Cardiac septum (tissue), 1 donor: ENCODE measurements at regions of chr9 and their contacts with region 1.

Region 1: GRCh38 chr9:2495221-2495974 is 126.2 kb upstream of the VLDLR start:
- DNase-seq: no peak

Region 2: DNA sequence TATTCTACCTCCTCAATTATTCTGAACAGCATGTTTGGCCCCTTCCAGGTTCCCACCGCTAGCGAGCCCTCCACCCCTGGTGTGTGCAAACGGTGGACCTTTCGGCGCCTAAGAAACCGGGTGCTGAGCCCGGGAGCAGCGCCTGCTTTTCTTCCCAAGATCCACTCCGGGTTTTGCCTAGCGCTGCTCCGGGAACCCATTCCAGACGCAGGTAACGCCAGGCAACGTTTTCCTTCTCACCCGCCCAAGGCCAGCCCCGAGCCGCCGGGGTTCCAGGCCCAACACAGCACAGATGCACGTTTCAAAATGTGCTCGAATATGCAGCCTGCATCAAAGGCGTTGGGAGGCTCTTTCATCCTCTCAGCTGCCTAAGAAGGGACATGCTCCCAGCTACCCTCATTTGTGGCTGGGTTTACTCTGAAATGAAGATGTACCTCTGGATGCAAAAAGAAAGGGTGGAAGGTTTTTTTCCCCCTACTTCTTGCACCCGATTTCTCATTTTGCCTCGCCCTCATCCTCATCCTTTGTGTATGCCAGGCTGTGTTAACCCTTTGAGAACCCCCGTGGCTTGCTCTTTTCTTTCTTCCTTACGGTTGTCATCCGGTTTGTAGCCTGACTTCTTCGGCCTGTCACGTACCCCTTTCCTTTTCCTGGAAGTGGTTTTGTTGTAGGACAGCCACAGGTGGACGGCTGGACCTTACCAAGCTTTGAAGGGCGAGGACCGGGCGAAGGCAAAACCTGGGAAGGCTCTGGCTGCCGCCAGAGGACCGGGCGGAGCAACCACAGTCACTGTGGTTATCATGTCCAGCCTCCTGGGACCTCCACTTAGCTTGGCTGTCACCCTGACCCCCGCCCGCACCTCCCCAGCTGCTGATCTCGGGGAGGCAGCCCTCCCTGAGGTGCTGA is 253.3 kb before region 1 on chr9:
- intact Hi-C with region 1: no loop called
- DNase-seq: peak; percentile 88

Region 3: DNA sequence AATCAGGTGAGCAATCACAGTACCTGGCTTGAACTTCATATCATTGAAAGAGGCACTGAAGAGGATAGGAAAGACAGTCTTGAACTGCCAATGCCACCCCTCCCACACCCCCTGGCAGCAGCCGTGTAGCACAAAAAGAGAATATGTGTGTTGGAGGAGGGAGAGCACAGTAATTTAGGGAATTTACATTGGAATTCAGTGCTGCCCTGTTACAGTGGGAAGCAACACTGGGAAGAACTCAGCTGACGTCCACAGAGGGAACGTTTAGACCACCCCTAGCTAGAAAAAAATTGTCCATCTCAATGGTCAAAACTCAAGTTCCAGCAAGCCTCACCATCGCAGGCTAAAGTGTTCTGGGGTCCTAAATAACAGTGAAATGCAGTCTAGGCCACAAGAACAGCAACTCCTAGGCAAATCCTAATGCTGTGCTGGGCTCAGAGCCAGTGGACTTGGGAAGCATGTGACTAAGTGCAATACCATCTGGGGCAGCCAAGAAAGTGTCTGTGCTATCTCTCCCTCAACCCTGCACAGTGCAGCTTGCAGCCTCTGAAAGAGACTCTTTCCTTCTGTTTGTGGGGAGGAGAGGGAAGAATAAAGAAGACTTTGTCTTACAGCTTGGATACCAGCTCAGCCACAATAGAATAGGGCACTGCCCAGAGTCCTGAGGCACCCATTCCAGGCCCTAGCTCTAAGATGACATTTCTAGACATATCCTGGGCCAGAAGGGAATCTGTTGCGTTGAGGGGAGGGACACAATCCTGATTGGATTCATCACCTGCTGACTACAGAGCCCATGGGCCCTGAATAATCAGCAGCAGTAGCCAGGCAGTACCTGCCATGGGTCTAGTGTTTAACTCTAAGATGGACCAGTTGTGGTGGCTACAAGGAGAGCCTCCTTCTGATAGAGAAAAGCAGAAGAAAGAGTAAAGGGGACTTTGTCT is 64.1 kb after region 1 on chr9:
- intact Hi-C with region 1: loop called (anchors 1 kb)
- DNase-seq: peak; percentile 89

Region 4: GRCh38 chr9:2620919-2621679 is 125.7 kb after region 1 on chr9:
- intact Hi-C with region 1: loop called (anchors 5 kb)
- DNase-seq: peak; percentile 85

Region 5: DNA sequence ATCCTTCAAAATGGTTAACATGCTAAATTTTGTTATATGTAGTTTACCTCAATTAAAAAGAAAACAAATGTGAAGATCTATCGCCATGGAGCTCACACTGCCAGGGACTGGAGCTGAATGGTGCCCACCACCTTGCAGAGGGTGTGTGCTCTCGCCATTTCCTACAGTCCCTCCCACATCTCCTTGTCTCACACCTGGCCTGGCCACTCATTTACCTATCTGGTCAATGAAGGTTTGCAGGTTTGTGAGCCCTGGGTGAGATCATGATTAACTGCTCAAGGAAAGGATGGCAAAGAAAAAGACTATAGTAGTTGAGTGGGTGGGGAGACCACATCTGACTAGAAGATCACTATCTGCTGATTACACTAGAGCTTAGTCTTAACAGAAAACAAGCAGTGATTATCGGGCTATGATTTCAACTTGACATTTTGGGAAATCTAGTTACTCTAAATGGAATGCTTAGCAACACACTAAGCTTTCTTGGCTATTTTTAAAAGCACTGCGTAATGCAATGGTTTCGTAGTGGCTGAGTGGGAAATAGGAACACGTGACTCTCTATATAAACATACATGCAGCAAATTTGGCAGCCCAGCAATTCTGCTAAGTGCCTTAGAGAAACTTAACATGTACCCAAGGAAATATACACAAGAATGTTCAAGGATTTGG is 321.2 kb after region 1 on chr9:
- intact Hi-C with region 1: loop called (anchors 5 kb)
- DNase-seq: no peak